HepG2 (cell line): ENCODE measurements at regions of chr2 and their contacts with region 1.

Region 1: GRCh38 chr2:84881581-84882414 is 914 bp upstream of the TRABD2A start:
- DNase-seq: peak; percentile 73
- ATAC-seq: peak; percentile 81
- H3K4me3 ChIP-seq: peak overlapping the region in 2 of 3 experiments; percentile 37 to 63; a peak in 3 of 6 replicates
- H3K27ac ChIP-seq: no peak overlapping the region
- H3K4me1 ChIP-seq: peaks cover 40% of the 10 kb centered on the region
- H3K27me3 ChIP-seq: peaks cover 17 to 58% of the 10 kb centered on the region in 2 experiments
- CTCF ChIP-seq: peak; percentile 89
- EP300 ChIP-seq: no peak
- POLR2A ChIP-seq: no peak
- RAD21 ChIP-seq: peak; percentile 77

Region 2: DNA sequence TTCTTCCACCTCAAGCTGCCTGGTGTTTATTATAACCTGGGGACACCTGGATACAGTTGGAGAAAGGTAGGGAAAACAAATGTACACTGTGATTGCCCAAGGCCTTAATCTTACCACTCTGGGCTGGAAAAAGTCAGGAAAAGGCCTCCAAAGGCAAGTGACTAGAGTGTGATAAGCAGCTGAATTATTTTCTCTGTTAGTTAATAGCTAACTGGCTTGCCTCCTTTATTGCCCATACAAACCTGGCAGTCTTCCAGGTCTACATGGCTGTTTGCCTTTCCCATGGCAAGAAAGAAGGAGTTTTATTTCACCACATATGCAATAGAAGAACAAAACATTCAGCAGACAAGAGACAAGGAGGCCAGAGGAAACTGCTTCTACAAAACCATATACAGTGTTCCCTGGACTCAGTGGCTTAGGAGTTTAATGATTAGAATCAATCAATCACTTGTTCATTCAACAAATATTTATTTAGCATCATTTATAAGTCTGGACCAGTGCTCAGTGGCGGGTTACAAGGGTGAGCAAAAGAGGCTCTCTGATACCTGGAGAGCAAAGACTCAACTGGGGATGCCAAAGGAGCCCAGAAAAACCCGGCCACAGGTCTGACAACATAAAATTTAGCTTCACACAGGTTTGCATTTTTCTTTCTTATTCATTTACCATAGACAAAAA is 395.2 kb before region 1 on chr2:
- CTCF ChIA-PET with region 1: no interaction called
- POLR2A ChIA-PET with region 1: no interaction called
- in situ Hi-C with region 1: loop called (anchors 5 kb)
- intact Hi-C with region 1: no loop called
- DNase-seq: peak; percentile 81
- ATAC-seq: peak; percentile 75
- H3K4me3 ChIP-seq: no peak overlapping the region; a peak in 1 of 6 replicates
- H3K27ac ChIP-seq: peak overlapping the region; percentile 65
- H3K4me1 ChIP-seq: peaks cover 30% of the 10 kb centered on the region
- H3K27me3 ChIP-seq: no peaks in the 10 kb centered on the region
- CTCF ChIP-seq: no peak
- EP300 ChIP-seq: peak in 1 of 2 experiments; percentile 54; a peak in 1 of 4 replicates
- POLR2A ChIP-seq: no peak
- RAD21 ChIP-seq: no peak

Region 3: GRCh38 chr2:84495539-84496146 is 386.2 kb before region 1 on chr2:
- CTCF ChIA-PET with region 1: interaction called, 16 read pairs
- POLR2A ChIA-PET with region 1: no interaction called
- in situ Hi-C with region 1: no loop called
- intact Hi-C with region 1: loop called (anchors 1 kb)
- DNase-seq: peak; percentile 64
- ATAC-seq: peak; percentile 90
- H3K4me3 ChIP-seq: no peak overlapping the region
- H3K27ac ChIP-seq: no peak overlapping the region
- H3K4me1 ChIP-seq: peaks cover 5% of the 10 kb centered on the region; the same call in 1 of the 2 replicates
- H3K27me3 ChIP-seq: no peaks in the 10 kb centered on the region
- CTCF ChIP-seq: peak; percentile 81
- EP300 ChIP-seq: no peak
- POLR2A ChIP-seq: no peak
- RAD21 ChIP-seq: peak; percentile 65

Region 4: GRCh38 chr2:84631047-84631446 is 250.8 kb before region 1 on chr2:
- CTCF ChIA-PET with region 1: no interaction called
- POLR2A ChIA-PET with region 1: no interaction called
- in situ Hi-C with region 1: loop called (anchors 10 kb)
- intact Hi-C with region 1: no loop called
- DNase-seq: peak; percentile 48
- ATAC-seq: peak; percentile 94
- H3K4me3 ChIP-seq: no peak overlapping the region
- H3K27ac ChIP-seq: no peak overlapping the region
- H3K4me1 ChIP-seq: no peaks in the 10 kb centered on the region
- H3K27me3 ChIP-seq: no peaks in the 10 kb centered on the region
- CTCF ChIP-seq: peak; percentile 78
- EP300 ChIP-seq: no peak
- POLR2A ChIP-seq: no peak
- RAD21 ChIP-seq: peak; percentile 70

Region 5: GRCh38 chr2:84649487-84650142 is 232.2 kb before region 1 on chr2:
- CTCF ChIA-PET with region 1: no interaction called
- POLR2A ChIA-PET with region 1: no interaction called
- in situ Hi-C with region 1: no loop called
- intact Hi-C with region 1: loop called (anchors 1 kb)
- DNase-seq: no peak
- ATAC-seq: no peak
- H3K4me3 ChIP-seq: no peak overlapping the region
- H3K27ac ChIP-seq: no peak overlapping the region
- H3K4me1 ChIP-seq: no peaks in the 10 kb centered on the region
- H3K27me3 ChIP-seq: no peaks in the 10 kb centered on the region
- CTCF ChIP-seq: no peak
- EP300 ChIP-seq: no peak
- POLR2A ChIP-seq: no peak
- RAD21 ChIP-seq: no peak

Region 6: DNA sequence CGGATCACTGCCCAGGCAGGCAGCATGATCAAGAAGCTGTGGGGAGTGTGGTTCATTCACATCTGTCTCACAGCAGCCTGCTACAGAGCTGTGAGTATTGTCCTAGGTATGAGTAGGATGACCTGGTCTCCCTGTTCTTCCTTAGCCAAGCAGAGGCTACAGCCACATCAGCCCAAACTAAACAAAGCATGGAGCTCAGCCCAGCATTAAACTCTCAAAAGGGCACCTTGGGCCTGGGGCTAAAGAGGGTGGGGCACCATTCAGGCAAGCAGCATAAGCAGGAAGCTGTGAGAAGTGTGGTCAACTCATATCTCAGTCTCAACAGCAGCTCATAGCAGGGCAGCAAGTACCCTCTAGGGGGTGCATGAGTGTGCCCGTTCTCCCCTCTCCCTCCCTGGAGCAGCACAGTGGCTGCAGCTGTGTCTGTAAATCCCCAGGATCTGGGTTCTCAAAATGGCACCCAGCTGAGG is 140.5 kb before region 1 on chr2:
- CTCF ChIA-PET with region 1: interaction called, 7 read pairs
- POLR2A ChIA-PET with region 1: no interaction called
- in situ Hi-C with region 1: no loop called
- intact Hi-C with region 1: loop called (anchors 1 kb)
- DNase-seq: peak; percentile 25
- ATAC-seq: peak; percentile 100
- H3K4me3 ChIP-seq: no peak overlapping the region
- H3K27ac ChIP-seq: no peak overlapping the region
- H3K4me1 ChIP-seq: no peaks in the 10 kb centered on the region
- H3K27me3 ChIP-seq: no peaks in the 10 kb centered on the region
- CTCF ChIP-seq: peak; percentile 61
- EP300 ChIP-seq: no peak
- POLR2A ChIP-seq: no peak
- RAD21 ChIP-seq: 0 out of 2 replicates have a peak, but pooled peaks have one; percentile 39

Region 7: GRCh38 chr2:84970868-84971509 is 89.2 kb after region 1 on chr2 and contains the start of gene KCMF1:
- CTCF ChIA-PET with region 1: no interaction called
- POLR2A ChIA-PET with region 1: no interaction called
- in situ Hi-C with region 1: no loop called
- intact Hi-C with region 1: no loop called
- DNase-seq: no peak
- ATAC-seq: peak; percentile 70
- H3K4me3 ChIP-seq: peak within 1 kb of the TSS; percentile 81 to 99 (median 97)
- H3K27ac ChIP-seq: peak within 1 kb of the TSS; percentile 98
- H3K4me1 ChIP-seq: peaks cover 64% of the 10 kb centered on the region
- H3K27me3 ChIP-seq: no peaks in the 10 kb centered on the region; a peak in 1 of 5 replicates
- CTCF ChIP-seq: no peak
- EP300 ChIP-seq: no peak; a peak in 1 of 4 replicates
- POLR2A ChIP-seq: peak; percentile 9 to 68; a peak in 3 of 4 replicates
- RAD21 ChIP-seq: no peak
- total RNA-seq, gene KCMF1: 62.1 and 64.6 TPM in 2 replicates

Region 8: GRCh38 chr2:85131116-85131515 is 249.3 kb after region 1 on chr2:
- CTCF ChIA-PET with region 1: no interaction called
- POLR2A ChIA-PET with region 1: no interaction called
- in situ Hi-C with region 1: no loop called
- intact Hi-C with region 1: no loop called
- DNase-seq: peak; percentile 37
- ATAC-seq: peak; percentile 51
- H3K4me3 ChIP-seq: no peak overlapping the region
- H3K27ac ChIP-seq: no peak overlapping the region
- H3K4me1 ChIP-seq: peaks cover 13% of the 10 kb centered on the region
- H3K27me3 ChIP-seq: peaks cover 9 to 52% of the 10 kb centered on the region in 2 experiments
- CTCF ChIP-seq: peak; percentile 65
- EP300 ChIP-seq: no peak
- POLR2A ChIP-seq: no peak
- RAD21 ChIP-seq: peak; percentile 47; the same call in 1 of the 2 replicates